ENCODE measurements at regions of chr17 and their contacts with region 1.

Region 1: DNA sequence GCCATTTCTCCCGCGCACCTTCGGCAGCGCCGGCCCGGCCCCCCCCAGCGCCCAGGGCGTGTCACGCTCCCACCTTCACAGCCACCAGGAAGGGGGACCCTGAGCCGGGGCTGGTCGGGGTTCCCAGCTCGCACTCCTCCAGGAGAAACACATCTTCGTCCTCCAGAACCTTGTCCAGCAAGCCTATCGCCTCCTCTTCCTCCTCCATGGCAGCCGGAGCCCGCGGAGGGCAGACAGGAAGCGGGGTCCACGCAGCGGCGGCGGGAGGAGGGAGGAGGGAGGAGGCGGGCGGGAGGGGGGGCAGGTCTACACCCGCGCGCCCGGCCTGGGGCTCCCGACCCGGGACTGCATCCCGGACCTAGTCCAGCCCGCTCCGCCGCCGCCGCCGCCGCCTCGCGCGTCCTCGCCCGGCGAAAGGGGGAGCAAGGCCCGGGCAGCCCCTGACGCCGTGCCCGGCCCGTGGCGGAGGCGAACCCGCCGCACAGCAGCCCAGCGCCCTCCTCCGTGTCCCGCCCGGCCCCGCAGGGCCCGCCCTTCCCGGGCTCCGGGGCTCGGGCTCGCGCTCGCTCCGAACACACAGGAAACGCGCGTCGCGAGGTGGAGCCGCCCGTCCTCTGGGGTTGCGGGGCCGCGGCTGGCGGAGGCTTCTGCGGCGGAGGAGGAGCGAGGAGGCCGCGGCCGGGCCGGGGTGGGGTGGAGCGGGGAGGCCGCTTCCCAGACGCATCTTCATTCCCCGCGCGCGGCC is 70.7 kb downstream of the ABR start:
- DNase-seq: peak; percentile 73 to 88 (median 76)
- ATAC-seq: peak in 3 of 4 donors; percentile 1 to 33 (median 21)
- H3K4me3 ChIP-seq: peak overlapping the region; percentile 60 to 86 (median 74)
- H3K27ac ChIP-seq: peak overlapping the region; percentile 92 to 99 (median 96)
- H3K4me1 ChIP-seq: peaks cover 13 to 80% (median 67%) of the 10 kb centered on the region in 12 donors
- H3K27me3 ChIP-seq: no peaks in the 10 kb centered on the region
- CTCF ChIP-seq: no peak
- POLR2A ChIP-seq: peak in 1 of 2 donors; percentile 55

Region 2: GRCh38 chr17:1067282-1067956 is 41.6 kb before region 1 on chr17:
- intact Hi-C with region 1: loop called in 1 of 10 experiments (anchors 5 kb)
- DNase-seq: peak; percentile 48 to 79 (median 60)
- ATAC-seq: peak; percentile 83 to 94 (median 92)
- H3K4me3 ChIP-seq: no peak overlapping the region
- H3K27ac ChIP-seq: peak overlapping the region in 8 of 12 donors; percentile 3 to 73 (median 43)
- H3K4me1 ChIP-seq: peaks cover 0 to 11% (median 0%) of the 10 kb centered on the region in 12 donors
- H3K27me3 ChIP-seq: no peaks in the 10 kb centered on the region
- CTCF ChIP-seq: no peak
- POLR2A ChIP-seq: no peak

Region 3: DNA sequence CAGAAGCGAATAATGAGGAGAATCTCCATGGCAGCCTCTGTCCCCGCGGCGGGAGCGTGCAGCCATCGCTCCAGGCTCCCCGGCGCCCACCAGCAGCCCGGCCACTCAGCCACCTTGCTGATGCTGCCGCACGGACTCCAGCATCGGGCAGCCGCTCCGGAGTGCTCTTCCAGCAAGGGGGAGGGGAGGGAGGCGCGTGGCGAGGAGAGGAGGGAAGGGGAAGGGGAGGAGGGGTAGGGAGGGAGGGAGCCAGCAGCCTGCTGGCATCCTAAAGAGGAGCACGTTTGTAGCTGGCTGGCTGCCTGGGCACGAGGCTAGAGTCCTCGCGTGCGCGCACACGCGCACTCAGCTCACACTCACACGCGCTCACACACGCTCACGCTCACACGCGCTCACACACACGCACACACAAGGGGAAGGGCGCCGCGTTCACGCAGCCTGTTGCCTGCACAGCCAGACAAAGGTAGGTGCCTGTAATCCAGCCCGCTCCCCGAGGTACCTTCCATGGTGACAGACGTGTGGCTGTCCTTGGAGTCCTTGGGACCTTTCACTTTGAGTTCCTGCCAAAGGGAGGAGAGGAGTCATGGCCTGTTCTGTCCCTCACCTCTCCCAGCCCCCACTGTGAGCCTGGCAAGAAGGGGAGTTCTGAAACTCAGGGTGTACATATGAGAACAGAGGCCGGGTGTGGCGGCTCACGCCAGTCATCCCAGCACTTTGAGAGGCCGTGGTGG is 30.0 kb before region 1 on chr17:
- intact Hi-C with region 1: loop called in 1 of 10 experiments (anchors 5 kb)
- DNase-seq: peak; percentile 63 to 84 (median 80)
- ATAC-seq: peak; percentile 60 to 73 (median 68)
- H3K4me3 ChIP-seq: no peak overlapping the region
- H3K27ac ChIP-seq: peak overlapping the region in 10 of 12 donors; percentile 36 to 82 (median 70)
- H3K4me1 ChIP-seq: peaks cover 3 to 58% (median 19%) of the 10 kb centered on the region in 12 donors
- H3K27me3 ChIP-seq: no peaks in the 10 kb centered on the region
- CTCF ChIP-seq: no peak
- POLR2A ChIP-seq: no peak

Measured in heart left ventricle (tissue), 16 donors.